ENCODE measurements at regions of chr10 and their contacts with region 1.

Region 1: DNA sequence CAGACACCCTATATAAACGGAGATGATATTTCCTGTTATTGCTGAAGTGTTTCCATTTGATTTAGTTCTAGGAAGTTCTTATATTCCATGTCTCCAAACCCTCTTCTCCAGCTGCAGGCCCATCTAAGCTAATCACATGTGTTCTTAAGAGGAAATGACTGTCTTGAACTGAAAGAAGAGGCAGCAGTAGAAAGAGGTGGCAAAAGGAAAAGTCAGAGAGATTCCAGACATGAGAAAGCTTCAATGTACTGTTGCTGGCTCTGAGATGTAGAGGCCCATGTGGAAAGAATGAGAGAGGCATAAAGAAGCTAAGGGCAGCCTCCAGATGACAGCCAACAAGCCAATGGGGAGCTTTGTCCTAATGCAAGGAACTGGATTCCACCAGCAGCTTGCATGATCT is 287.2 kb downstream of the GFRA1 start:
- DNase-seq: no peak
- H3K4me3 ChIP-seq: no peak overlapping the region
- H3K27me3 ChIP-seq: no peaks in the 10 kb centered on the region
- CTCF ChIP-seq: no peak

Region 2: DNA sequence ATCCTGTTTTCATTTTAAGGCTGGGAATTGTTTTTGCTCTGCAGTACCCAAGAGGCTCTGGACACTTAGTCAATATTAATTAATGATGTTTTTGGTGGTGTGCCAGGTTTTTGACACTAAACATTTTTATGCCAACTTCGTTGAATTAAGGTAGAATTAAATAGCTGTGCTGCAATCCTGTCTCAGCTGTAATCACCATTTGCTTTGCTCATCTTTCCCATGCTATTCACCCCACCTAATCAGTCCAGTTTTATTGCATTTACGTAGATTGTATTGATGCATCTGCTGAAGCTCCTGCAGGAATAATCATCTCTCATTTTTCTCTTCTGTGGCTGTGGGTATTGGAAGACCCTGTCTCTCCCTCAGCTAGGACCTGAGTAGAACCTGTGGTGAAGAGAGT is 1100.3 kb before region 1 on chr10:
- CTCF ChIA-PET with region 1: no interaction called
- POLR2A ChIA-PET with region 1: no interaction called
- DNase-seq: no peak
- H3K4me3 ChIP-seq: no peak overlapping the region
- H3K27me3 ChIP-seq: no peaks in the 10 kb centered on the region
- CTCF ChIP-seq: no peak

Region 3: GRCh38 chr10:115948465-115948864 is 37.3 kb before region 1 on chr10:
- CTCF ChIA-PET with region 1: no interaction called
- POLR2A ChIA-PET with region 1: interaction called, 10 read pairs
- DNase-seq: no peak
- H3K4me3 ChIP-seq: no peak overlapping the region
- H3K27me3 ChIP-seq: no peaks in the 10 kb centered on the region
- CTCF ChIP-seq: peak; percentile 60